Vagina (tissue), 2 donors: ENCODE measurements at regions of chr11 and their contacts with region 1.

Region 1: GRCh38 chr11:83220279-83220678 is 26.8 kb downstream of the ANKRD42 start:
- DNase-seq: no peak
- H3K4me3 ChIP-seq: no peak overlapping the region
- H3K27ac ChIP-seq: no peak overlapping the region
- H3K4me1 ChIP-seq: no peaks in the 10 kb centered on the region
- H3K27me3 ChIP-seq: no peaks in the 10 kb centered on the region
- CTCF ChIP-seq: no peak
- POLR2A ChIP-seq: no peak

Region 2: DNA sequence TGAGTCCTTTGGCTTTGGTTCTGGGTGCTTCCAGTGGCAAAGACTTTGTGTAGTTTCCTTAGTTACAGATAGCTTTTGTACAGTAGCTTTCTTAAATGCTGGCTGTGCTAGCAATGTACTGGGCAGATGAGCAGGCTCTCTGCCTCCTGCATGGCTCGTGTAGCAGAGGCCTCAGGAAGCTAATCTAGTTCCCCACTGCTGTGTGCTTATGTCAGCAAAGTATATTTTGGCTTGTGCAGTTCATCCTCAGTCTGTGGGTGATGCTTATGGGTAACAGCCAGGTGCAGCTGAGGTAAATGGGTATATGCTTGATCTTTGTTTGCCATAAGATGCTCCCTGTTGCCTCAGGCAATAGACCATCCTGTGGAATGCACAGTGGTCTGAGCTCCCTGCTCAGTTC is 417.6 kb before region 1 on chr11:
- intact Hi-C with region 1: loop called (anchors 5 kb)
- DNase-seq: no peak
- H3K4me3 ChIP-seq: no peak overlapping the region
- H3K27ac ChIP-seq: no peak overlapping the region
- H3K4me1 ChIP-seq: no peaks in the 10 kb centered on the region
- H3K27me3 ChIP-seq: no peaks in the 10 kb centered on the region
- CTCF ChIP-seq: no peak
- POLR2A ChIP-seq: no peak